BJ (cell line): ENCODE measurements at regions of chr15 and their contacts with region 1.

Region 1: DNA sequence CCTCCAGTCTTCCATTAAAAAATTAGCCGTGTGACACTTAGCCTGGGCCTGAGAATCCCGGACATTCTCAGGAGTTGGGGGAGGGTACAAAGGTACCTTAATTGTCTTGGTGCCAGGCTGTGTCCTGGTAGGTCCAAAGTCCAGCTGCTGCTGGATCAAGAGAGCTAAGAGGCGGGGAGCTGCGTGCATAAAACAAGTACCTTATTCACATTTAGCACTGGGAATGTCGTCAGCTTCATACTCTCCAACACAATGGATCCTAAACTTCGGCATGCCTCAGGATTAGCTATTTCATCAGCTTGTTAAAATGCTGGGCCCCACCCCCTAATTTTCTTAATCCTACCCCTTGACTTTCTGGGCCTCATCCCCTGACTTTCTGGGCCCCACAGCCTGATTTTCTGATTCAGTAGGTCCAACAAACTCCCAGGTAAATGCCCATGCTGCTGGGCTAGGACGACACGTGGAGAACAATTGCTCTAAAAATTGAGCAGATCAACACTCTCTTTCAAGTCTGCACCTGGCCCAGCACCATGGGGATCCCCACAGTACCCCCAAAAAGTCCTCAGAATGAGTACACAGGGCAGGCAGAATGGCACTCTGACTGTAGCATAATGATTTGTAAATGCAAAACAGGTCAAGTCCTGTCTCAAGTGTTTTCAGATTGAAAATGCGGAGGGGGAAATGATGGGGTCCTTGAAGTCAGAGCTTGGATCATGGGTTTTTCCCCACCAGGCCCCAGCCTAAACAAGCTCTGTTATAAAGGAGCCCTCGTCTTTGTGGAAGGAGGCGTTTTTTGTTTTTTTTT is 5.6 kb upstream of the AEN start:
- DNase-seq: no peak
- H3K4me3 ChIP-seq: no peak overlapping the region
- H3K27me3 ChIP-seq: no peaks in the 10 kb centered on the region
- CTCF ChIP-seq: no peak

Region 2: DNA sequence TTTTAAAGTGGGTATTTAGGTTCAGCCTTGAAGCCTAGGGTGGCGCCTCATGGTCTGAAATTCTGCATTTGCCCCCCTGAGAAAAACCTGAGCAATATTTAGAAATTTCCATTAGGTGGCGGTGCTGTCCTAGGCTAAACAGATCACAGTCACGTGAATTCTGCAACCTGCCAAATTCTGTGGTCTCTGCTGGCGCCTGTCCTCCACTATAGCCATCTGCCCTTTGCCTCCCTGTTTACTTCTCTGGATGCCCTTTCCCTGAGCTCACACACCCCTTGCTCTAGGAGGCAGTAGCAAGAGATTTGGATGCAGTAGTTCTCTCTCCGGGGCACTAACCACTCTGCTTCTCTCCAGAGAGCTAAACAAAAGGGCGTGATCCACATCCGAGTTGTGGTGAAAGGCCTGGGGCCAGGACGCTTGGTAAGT is 138.9 kb before region 1 on chr15:
- CTCF ChIA-PET with region 1: interaction called, 11 read pairs
- POLR2A ChIA-PET with region 1: no interaction called
- DNase-seq: no peak
- H3K4me3 ChIP-seq: no peak overlapping the region
- H3K27me3 ChIP-seq: no peaks in the 10 kb centered on the region
- CTCF ChIP-seq: peak; percentile 62

Region 3: GRCh38 chr15:89704411-89704810 is 1088.9 kb after region 1 on chr15:
- CTCF ChIA-PET with region 1: no interaction called
- POLR2A ChIA-PET with region 1: no interaction called
- DNase-seq: no peak
- H3K4me3 ChIP-seq: no peak overlapping the region
- H3K27me3 ChIP-seq: peaks cover 15% of the 10 kb centered on the region
- CTCF ChIP-seq: no peak